Activated naive CD4-positive, alpha-beta T cell treated with anti-CD3 and anti-CD28 coated beads for 36 hours (primary cell): ENCODE measurements at regions of chr5 and their contacts with region 1.

Region 1: DNA sequence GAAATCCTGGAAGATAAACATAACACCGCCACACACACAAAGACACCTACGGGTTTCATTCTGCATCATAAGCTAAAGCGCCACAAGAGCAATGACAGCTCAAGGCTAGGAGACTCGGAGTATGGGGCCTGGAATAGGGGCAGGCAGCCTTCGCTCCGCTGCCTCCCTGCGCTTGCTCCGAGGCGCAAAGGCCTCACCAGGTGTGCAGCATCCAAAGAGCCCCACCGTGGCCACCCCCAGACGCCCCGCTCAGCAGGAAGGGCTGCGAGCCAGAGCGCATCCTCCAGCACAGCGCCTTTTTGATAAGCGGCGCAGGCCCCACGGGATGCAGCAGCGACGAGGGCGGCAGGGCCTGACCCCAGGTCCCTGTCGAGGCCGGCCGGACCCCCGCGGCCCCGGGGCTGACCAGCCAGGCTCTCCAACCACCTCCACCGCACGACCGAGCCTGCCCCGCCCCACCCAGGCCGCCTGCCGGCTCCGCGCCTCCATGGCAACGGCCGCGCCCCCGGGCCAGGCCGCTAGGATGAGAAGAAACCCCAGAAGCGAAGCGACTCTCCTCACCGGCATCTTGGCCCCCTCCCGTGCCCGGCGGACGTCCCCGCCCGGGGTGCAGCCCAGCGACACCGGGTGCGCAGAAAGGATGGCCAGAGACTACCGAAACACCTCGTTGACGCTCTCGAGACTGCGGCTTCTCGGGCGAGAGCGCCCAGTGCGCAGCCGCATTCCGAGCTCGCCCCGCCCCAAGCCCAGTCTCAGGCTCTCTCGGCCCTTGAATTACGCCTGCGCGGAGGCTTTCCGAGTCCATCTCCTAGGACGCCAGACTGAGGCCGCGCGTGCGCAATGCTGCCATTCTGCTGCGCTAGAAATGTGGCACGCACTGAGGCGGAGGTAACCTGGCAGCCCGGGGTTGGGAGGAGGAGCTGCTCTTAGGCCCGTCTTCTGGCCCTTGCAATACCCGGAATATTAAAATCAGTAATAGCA is at the start of gene KIF3A:
- DNase-seq: peak; percentile 99
- H3K4me3 Mint-ChIP-seq: peak within 1 kb of the TSS; percentile 84
- H3K27ac Mint-ChIP-seq: peak within 1 kb of the TSS; percentile 50
- H3K4me1 Mint-ChIP-seq: peaks cover 27% of the 10 kb centered on the region
- H3K27me3 Mint-ChIP-seq: no peaks in the 10 kb centered on the region
- total RNA-seq, gene KIF3A: 5.0 to 6.1 TPM

Region 2: DNA sequence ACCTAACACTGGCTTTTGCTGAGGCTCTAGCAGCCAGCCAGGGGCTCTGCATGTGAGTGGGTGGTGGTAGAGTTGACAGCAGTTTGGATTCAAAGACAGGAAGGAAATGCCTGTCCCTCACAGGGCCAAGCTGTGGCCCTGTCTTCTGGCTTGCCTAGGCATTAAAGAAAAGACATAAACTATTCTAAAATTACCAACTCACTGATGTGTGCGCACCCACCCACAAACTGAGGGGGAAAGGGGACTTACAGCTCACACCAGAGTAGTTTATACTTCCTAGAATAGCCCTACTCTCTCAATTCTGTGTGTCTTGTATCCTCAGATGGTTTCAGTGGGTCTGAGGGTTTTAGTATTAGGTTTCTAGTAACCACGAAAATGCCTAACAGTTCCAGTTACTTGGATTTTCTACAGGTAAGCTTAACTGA is 97.4 kb before region 1 on chr5:
- CTCF ChIA-PET with region 1: interaction called, 3 read pairs
- intact Hi-C with region 1: loop called (anchors 1 kb)
- DNase-seq: no peak
- H3K4me3 Mint-ChIP-seq: no peak overlapping the region
- H3K27ac Mint-ChIP-seq: no peak overlapping the region
- H3K4me1 Mint-ChIP-seq: peaks cover 43% of the 10 kb centered on the region
- H3K27me3 Mint-ChIP-seq: no peaks in the 10 kb centered on the region

Region 3: GRCh38 chr5:132753135-132753987 is 16.2 kb after region 1 on chr5:
- CTCF ChIA-PET with region 1: interaction called, 30 read pairs
- intact Hi-C with region 1: loop called (anchors 1 kb)
- DNase-seq: peak; percentile 52
- H3K4me3 Mint-ChIP-seq: no peak overlapping the region
- H3K27ac Mint-ChIP-seq: no peak overlapping the region
- H3K4me1 Mint-ChIP-seq: peaks cover 35% of the 10 kb centered on the region
- H3K27me3 Mint-ChIP-seq: no peaks in the 10 kb centered on the region

Region 4: DNA sequence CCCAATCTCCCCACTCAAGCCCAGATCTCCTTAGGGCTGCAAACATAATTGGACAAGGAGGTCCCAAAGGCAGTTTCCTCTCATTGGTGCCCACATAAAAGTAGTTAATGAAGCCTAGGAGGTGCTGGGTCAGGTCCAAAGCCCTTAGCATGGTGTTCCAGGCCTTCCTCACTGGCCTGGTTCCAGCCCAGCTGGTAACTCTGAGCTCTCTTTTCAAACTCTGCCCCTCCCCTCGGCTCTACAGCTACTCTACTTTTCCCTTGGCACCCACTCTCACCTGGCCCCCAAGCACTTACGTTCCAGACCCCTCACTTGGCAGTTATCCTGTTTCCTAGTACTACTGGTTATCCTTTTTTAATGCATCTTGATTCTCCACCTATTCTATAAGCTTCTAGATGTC is 30.0 kb after region 1 on chr5:
- CTCF ChIA-PET with region 1: no interaction called
- intact Hi-C with region 1: no loop called
- DNase-seq: no peak
- H3K4me3 Mint-ChIP-seq: no peak overlapping the region
- H3K27ac Mint-ChIP-seq: no peak overlapping the region
- H3K4me1 Mint-ChIP-seq: no peaks in the 10 kb centered on the region
- H3K27me3 Mint-ChIP-seq: no peaks in the 10 kb centered on the region

Region 5: DNA sequence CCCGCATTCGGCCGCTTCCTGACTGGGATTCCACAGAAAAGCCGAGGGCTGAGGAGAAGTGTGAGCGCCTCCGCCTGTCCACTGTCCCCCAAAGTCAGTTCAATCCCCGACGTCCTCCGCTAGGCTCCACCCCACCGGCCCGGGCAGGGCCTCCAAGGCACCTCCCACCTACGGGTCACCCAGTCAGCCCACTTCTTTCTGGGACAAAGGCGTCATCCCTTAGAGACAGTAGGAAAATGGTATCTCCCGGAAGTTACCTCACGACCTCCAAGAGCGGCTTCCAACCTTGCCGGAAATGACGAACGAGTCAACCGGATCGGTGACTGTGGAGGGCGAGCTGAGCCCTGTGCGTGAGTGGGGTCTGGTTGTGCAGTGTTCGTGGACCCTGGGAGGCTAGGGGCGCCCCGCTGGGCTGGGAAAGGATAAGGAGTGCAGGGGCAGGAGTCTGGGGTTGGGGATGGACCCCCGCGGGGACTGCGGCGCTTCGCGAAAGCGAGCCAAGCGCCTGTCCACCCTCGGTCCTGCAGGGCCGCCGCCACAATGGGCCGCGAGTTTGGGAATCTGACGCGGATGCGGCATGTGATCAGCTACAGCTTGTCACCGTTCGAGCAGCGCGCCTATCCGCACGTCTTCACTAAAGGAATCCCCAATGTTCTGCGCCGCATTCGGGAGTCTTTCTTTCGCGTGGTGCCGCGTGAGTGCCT is 129.4 kb after region 1 on chr5 and contains the starts of genes GDF9 and UQCRQ:
- CTCF ChIA-PET with region 1: no interaction called
- intact Hi-C with region 1: loop called (anchors 1 kb)
- DNase-seq: peak; percentile 96
- H3K4me3 Mint-ChIP-seq: peak within 1 kb of the TSS; percentile 99
- H3K27ac Mint-ChIP-seq: peak within 1 kb of the TSS; percentile 97
- H3K4me1 Mint-ChIP-seq: peaks cover 27% of the 10 kb centered on the region
- H3K27me3 Mint-ChIP-seq: no peaks in the 10 kb centered on the region
- total RNA-seq, gene GDF9: 0.64 to 1.2 TPM
- total RNA-seq, gene UQCRQ: 677 to 784 TPM

Region 6: GRCh38 chr5:133316427-133316826 is 579.3 kb after region 1 on chr5:
- CTCF ChIA-PET with region 1: no interaction called
- intact Hi-C with region 1: no loop called
- DNase-seq: peak; percentile 23
- H3K4me3 Mint-ChIP-seq: no peak overlapping the region
- H3K27ac Mint-ChIP-seq: no peak overlapping the region
- H3K4me1 Mint-ChIP-seq: peaks cover 4% of the 10 kb centered on the region
- H3K27me3 Mint-ChIP-seq: no peaks in the 10 kb centered on the region

Region 7: DNA sequence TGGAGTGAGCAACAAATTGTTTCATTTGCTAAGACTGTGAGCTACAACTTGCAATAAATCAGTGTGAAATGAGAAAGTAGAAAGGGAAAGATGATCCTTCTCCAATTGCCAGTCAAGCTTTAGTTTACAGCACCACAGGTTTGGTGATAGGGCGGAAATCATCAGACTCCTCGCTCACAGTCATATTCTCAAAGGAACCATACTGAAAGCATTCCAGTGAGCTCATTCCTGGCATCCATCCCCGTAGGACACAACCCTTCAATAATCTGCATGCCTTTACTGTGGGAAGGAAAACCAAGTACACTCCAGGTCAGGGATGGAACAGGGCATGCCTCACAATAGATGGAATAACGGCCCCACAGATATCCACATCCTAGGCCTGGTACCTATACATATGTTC is 794.5 kb after region 1 on chr5:
- CTCF ChIA-PET with region 1: no interaction called
- intact Hi-C with region 1: no loop called
- DNase-seq: no peak
- H3K4me3 Mint-ChIP-seq: no peak overlapping the region
- H3K27ac Mint-ChIP-seq: no peak overlapping the region
- H3K4me1 Mint-ChIP-seq: no peaks in the 10 kb centered on the region
- H3K27me3 Mint-ChIP-seq: no peaks in the 10 kb centered on the region